ENCODE measurements at regions of chr3 and their contacts with region 1.

Region 1: GRCh38 chr3:46368569-46368968 is 2.2 kb upstream of the CCR5 start:
- DNase-seq: peak; percentile 79
- ATAC-seq: peak; percentile 93
- H3K4me3 ChIP-seq: no peak overlapping the region
- H3K4me3 Mint-ChIP-seq: peak overlapping the region; percentile 33
- H3K27ac ChIP-seq: no peak overlapping the region
- H3K27ac Mint-ChIP-seq: peak overlapping the region; percentile 28
- H3K4me1 ChIP-seq: peaks cover 12 to 20% of the 10 kb centered on the region in 2 donors
- H3K4me1 Mint-ChIP-seq: peaks cover 32% of the 10 kb centered on the region
- H3K27me3 ChIP-seq: no peaks in the 10 kb centered on the region
- H3K27me3 Mint-ChIP-seq: no peaks in the 10 kb centered on the region
- CTCF ChIP-seq: peak; percentile 57

Region 2: GRCh38 chr3:45938864-45939263 is 429.7 kb before region 1 on chr3:
- CTCF ChIA-PET with region 1: interaction called, 60 read pairs
- POLR2A ChIA-PET with region 1: no interaction called
- intact Hi-C with region 1: loop called (anchors 2 kb)
- DNase-seq: peak; percentile 86
- ATAC-seq: peak; percentile 79
- H3K4me3 ChIP-seq: no peak overlapping the region
- H3K4me3 Mint-ChIP-seq: no peak overlapping the region
- H3K27ac ChIP-seq: no peak overlapping the region
- H3K27ac Mint-ChIP-seq: no peak overlapping the region
- H3K4me1 ChIP-seq: peaks cover 0 to 5% of the 10 kb centered on the region in 2 donors
- H3K4me1 Mint-ChIP-seq: no peaks in the 10 kb centered on the region
- H3K27me3 ChIP-seq: no peaks in the 10 kb centered on the region
- H3K27me3 Mint-ChIP-seq: no peaks in the 10 kb centered on the region
- CTCF ChIP-seq: peak; percentile 86

Region 3: GRCh38 chr3:46098319-46098761 is 270.2 kb before region 1 on chr3:
- CTCF ChIA-PET with region 1: interaction called, 14 read pairs
- POLR2A ChIA-PET with region 1: no interaction called
- intact Hi-C with region 1: no loop called
- DNase-seq: peak; percentile 58
- ATAC-seq: peak; percentile 13
- H3K4me3 ChIP-seq: peak overlapping the region in 3 of 5 experiments; percentile 27 to 46 (median 37)
- H3K4me3 Mint-ChIP-seq: peak overlapping the region; percentile 73
- H3K27ac ChIP-seq: peak overlapping the region; percentile 30 to 65
- H3K27ac Mint-ChIP-seq: peak overlapping the region; percentile 95
- H3K4me1 ChIP-seq: peaks cover 61 to 68% of the 10 kb centered on the region in 2 donors
- H3K4me1 Mint-ChIP-seq: peaks cover 69% of the 10 kb centered on the region
- H3K27me3 ChIP-seq: no peaks in the 10 kb centered on the region
- H3K27me3 Mint-ChIP-seq: no peaks in the 10 kb centered on the region
- CTCF ChIP-seq: no peak

Region 4: DNA sequence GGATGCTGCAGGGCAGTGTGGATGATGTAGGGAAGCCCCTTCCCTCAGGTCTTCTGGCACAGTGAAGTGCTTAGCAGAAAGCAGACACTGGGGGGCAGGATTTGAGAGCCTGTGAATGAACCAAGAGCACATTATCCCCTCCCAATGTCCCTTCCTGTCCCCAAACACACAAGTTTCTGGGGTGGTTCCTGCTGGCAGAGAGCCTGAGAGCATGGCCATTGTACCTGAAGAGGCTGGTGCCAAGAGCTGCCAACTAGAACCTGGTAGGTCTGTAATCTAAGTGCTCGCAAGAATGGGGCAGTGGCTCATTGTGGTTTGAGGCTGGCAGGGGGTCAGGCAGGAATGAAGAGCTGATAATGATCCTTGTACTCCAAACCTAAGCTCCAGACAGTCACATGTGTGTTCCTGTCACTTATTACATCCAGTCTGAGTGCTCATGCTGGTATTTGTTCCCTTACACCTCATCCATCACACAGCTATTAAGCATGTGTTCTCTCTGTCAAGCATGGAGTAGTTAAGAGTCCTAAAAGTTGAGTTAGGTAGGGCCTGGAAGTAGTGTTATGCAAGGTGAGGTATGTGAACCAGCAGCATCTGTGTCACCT is 153.7 kb before region 1 on chr3:
- CTCF ChIA-PET with region 1: interaction called, 67 read pairs
- POLR2A ChIA-PET with region 1: no interaction called
- intact Hi-C with region 1: no loop called
- DNase-seq: no peak
- ATAC-seq: no peak
- H3K4me3 ChIP-seq: no peak overlapping the region
- H3K4me3 Mint-ChIP-seq: no peak overlapping the region
- H3K27ac ChIP-seq: no peak overlapping the region
- H3K27ac Mint-ChIP-seq: no peak overlapping the region
- H3K4me1 ChIP-seq: peaks cover 11 to 15% of the 10 kb centered on the region in 2 donors
- H3K4me1 Mint-ChIP-seq: peaks cover 4% of the 10 kb centered on the region
- H3K27me3 ChIP-seq: peaks cover 0 to 5% (median 2%) of the 10 kb centered on the region in 4 experiments
- H3K27me3 Mint-ChIP-seq: no peaks in the 10 kb centered on the region
- CTCF ChIP-seq: no peak

Region 5: DNA sequence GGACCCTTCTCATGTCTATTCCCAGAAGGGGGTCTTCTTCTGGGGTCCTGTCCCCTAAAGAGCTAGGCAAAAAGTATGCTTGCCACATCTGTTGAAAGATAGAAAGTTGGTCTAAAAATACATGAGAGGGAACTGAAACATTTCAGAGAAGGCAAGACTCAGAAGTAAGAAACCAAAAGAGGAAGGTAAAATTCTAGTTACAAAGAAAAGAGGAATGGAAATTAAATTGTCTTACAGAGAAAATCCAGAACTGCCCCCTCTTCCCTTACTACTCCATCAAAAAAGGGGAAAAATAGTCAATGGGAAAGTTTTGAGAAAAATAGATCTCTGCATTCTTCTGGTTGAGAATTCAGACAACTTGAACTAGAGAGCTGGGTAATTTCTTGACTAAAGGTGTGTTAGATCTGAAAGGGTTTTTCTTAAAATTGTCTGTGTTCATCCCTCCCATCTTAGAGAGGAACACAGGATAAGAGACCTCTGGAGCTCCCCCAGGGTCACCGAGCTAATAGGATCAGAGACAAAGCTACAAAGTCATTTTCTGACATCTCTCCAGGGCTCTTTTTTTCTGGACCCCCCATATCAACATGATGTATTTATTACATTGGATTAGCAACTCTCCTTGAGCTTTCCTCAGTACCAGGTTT is 47.0 kb before region 1 on chr3:
- CTCF ChIA-PET with region 1: interaction called, 10 read pairs
- POLR2A ChIA-PET with region 1: interaction called, 8 read pairs
- intact Hi-C with region 1: loop called (anchors 5 kb)
- DNase-seq: peak; percentile 64
- ATAC-seq: peak; percentile 65
- H3K4me3 ChIP-seq: peak overlapping the region in 3 of 5 experiments; percentile 16 to 47 (median 33)
- H3K4me3 Mint-ChIP-seq: peak overlapping the region; percentile 55
- H3K27ac ChIP-seq: peak overlapping the region; percentile 25 to 76
- H3K27ac Mint-ChIP-seq: peak overlapping the region; percentile 69
- H3K4me1 ChIP-seq: peaks cover 35% of the 10 kb centered on the region in 2 donors
- H3K4me1 Mint-ChIP-seq: peaks cover 47% of the 10 kb centered on the region
- H3K27me3 ChIP-seq: no peaks in the 10 kb centered on the region
- H3K27me3 Mint-ChIP-seq: no peaks in the 10 kb centered on the region
- CTCF ChIP-seq: no peak

Region 6: DNA sequence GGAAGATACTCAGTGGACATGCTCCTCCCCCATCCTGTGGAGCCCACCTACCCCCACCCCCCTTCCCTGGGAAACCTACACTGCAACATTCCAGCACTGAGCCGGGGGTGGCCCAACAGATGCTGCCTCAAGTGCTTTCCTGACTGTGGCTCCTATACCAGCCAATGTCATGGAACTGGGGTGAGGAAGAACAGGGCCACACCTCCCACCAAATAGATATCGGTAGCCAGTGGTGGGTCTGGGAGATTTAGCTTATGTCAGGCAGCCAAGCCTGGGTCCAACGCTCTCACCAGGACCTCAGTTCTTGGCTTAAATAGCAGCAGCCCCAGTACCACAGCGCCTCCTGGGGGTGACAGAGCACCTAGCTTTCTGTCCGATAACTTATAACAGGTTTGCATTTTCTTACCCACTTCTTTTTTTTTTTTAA is 1789.4 kb after region 1 on chr3:
- CTCF ChIA-PET with region 1: no interaction called
- POLR2A ChIA-PET with region 1: no interaction called
- intact Hi-C with region 1: no loop called
- DNase-seq: peak; percentile 58
- ATAC-seq: peak; percentile 28
- H3K4me3 ChIP-seq: no peak overlapping the region
- H3K4me3 Mint-ChIP-seq: no peak overlapping the region
- H3K27ac ChIP-seq: no peak overlapping the region
- H3K27ac Mint-ChIP-seq: no peak overlapping the region
- H3K4me1 ChIP-seq: no peaks in the 10 kb centered on the region
- H3K4me1 Mint-ChIP-seq: no peaks in the 10 kb centered on the region
- H3K27me3 ChIP-seq: no peaks in the 10 kb centered on the region
- H3K27me3 Mint-ChIP-seq: no peaks in the 10 kb centered on the region
- CTCF ChIP-seq: peak; percentile 63

Measured in B cell (primary cell).